ENCODE measurements at regions of chr7 and their contacts with region 1.

Region 1: DNA sequence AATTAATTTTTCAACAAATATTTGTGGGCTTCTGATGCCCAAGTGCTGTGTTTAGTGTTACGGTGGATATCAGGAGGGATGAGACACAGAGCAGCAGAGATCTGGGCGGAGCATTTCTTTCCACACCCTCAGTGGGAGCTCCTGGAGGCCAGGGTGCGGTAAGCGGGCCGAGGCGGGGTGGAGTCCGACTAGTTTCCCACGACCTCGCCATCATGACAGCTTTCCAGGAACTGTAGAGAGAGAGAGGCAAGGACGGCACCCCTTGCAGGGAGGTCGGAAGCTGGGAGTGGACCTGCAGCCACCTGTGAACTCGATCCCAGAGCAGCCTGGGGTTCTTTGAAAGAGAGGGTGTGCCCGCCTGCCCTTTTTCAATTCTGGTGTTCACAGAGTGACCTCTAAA is 128.2 kb downstream of the ACTR3B start:
- DNase-seq: no peak
- H3K4me3 ChIP-seq: no peak overlapping the region
- H3K27ac ChIP-seq: no peak overlapping the region
- H3K4me1 ChIP-seq: no peaks in the 10 kb centered on the region
- H3K27me3 ChIP-seq: no peaks in the 10 kb centered on the region
- CTCF ChIP-seq: no peak
- EP300 ChIP-seq: no peak
- POLR2A ChIP-seq: no peak

Region 2: DNA sequence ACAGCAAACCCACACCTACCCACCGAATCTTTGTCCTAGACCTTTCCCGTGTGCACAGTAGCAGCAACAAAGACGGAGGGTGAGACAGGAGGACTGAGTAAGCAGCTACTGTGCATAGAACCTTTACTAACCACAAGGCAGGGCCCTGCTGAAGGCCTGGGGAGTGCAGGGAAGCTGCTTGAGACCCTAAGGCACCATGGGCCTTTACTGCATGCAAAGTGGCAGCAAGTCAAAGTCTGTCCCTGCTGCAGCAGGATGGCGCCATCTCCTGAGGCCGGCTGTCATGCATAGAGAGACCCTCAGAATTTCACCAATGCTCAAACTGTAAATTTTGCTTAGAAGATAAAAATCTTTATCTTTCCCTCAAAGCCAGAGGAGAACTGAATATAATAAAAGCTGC is 482.3 kb after region 1 on chr7:
- intact Hi-C with region 1: loop called in 1 of 4 experiments (anchors 5 kb)
- DNase-seq: no peak
- H3K4me3 ChIP-seq: no peak overlapping the region
- H3K27ac ChIP-seq: no peak overlapping the region
- H3K4me1 ChIP-seq: no peaks in the 10 kb centered on the region
- H3K27me3 ChIP-seq: no peaks in the 10 kb centered on the region
- CTCF ChIP-seq: no peak
- EP300 ChIP-seq: no peak
- POLR2A ChIP-seq: no peak